CD4-positive, alpha-beta memory T cell (primary cell): ENCODE measurements at regions of chr20 and their contacts with region 1.

Region 1: GRCh38 chr20:21235484-21236445 is 67.4 kb upstream of the XRN2 start:
- DNase-seq: peak; percentile 57 to 66 (median 62)
- H3K4me3 ChIP-seq: no peak overlapping the region
- H3K4me3 Mint-ChIP-seq: no peak overlapping the region
- H3K27ac ChIP-seq: no peak overlapping the region
- H3K27ac Mint-ChIP-seq: no peak overlapping the region
- H3K4me1 ChIP-seq: peaks cover 4% of the 10 kb centered on the region
- H3K4me1 Mint-ChIP-seq: peaks cover 2 to 4% (median 3%) of the 10 kb centered on the region in 4 donors
- H3K27me3 ChIP-seq: no peaks in the 10 kb centered on the region
- H3K27me3 Mint-ChIP-seq: no peaks in the 10 kb centered on the region

Region 2: GRCh38 chr20:20338133-20338730 is 897.5 kb before region 1 on chr20:
- CTCF ChIA-PET with region 1: no interaction called
- POLR2A ChIA-PET with region 1: no interaction called
- intact Hi-C with region 1: no loop called
- DNase-seq: no peak
- H3K4me3 ChIP-seq: no peak overlapping the region
- H3K4me3 Mint-ChIP-seq: no peak overlapping the region
- H3K27ac ChIP-seq: no peak overlapping the region
- H3K27ac Mint-ChIP-seq: no peak overlapping the region
- H3K4me1 ChIP-seq: no peaks in the 10 kb centered on the region
- H3K4me1 Mint-ChIP-seq: no peaks in the 10 kb centered on the region
- H3K27me3 ChIP-seq: no peaks in the 10 kb centered on the region
- H3K27me3 Mint-ChIP-seq: peaks cover 2 to 7% of the 10 kb centered on the region in 2 donors

Region 3: GRCh38 chr20:21208999-21209398 is 26.8 kb before region 1 on chr20:
- CTCF ChIA-PET with region 1: no interaction called
- POLR2A ChIA-PET with region 1: no interaction called
- intact Hi-C with region 1: no loop called
- DNase-seq: no peak
- H3K4me3 ChIP-seq: no peak overlapping the region
- H3K4me3 Mint-ChIP-seq: no peak overlapping the region
- H3K27ac ChIP-seq: no peak overlapping the region
- H3K27ac Mint-ChIP-seq: no peak overlapping the region
- H3K4me1 ChIP-seq: no peaks in the 10 kb centered on the region
- H3K4me1 Mint-ChIP-seq: no peaks in the 10 kb centered on the region
- H3K27me3 ChIP-seq: no peaks in the 10 kb centered on the region
- H3K27me3 Mint-ChIP-seq: no peaks in the 10 kb centered on the region

Region 4: DNA sequence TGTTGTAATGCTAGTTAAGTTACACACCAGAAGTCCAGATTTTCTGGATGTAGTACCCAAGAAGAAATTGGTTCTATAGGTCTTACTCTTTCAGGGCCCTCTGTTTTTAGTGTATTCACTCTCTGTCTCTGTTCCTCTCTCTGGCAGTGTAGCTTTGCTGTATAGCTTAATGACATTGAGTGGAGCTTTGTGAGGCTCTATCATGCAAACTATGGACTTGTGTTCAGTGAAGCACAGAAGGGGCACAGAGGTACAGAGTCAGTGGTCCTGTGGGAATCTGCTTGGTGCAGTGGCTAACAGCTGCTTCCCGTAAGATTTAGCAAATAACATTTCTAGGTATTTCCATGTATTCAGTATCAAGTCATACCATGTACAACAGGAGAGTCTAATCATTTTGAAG is 135.4 kb after region 1 on chr20:
- CTCF ChIA-PET with region 1: interaction called, 11 read pairs
- POLR2A ChIA-PET with region 1: no interaction called
- intact Hi-C with region 1: no loop called
- DNase-seq: no peak
- H3K4me3 ChIP-seq: no peak overlapping the region
- H3K4me3 Mint-ChIP-seq: no peak overlapping the region
- H3K27ac ChIP-seq: no peak overlapping the region
- H3K27ac Mint-ChIP-seq: no peak overlapping the region
- H3K4me1 ChIP-seq: no peaks in the 10 kb centered on the region
- H3K4me1 Mint-ChIP-seq: peaks cover 6 to 22% (median 7%) of the 10 kb centered on the region in 4 donors
- H3K27me3 ChIP-seq: no peaks in the 10 kb centered on the region
- H3K27me3 Mint-ChIP-seq: no peaks in the 10 kb centered on the region

Region 5: GRCh38 chr20:21514553-21515251 is 278.9 kb after region 1 on chr20:
- CTCF ChIA-PET with region 1: interaction called, 337 read pairs
- POLR2A ChIA-PET with region 1: no interaction called
- intact Hi-C with region 1: no loop called
- DNase-seq: no peak
- H3K4me3 ChIP-seq: no peak overlapping the region
- H3K4me3 Mint-ChIP-seq: peak overlapping the region; percentile 52 to 83 (median 76)
- H3K27ac ChIP-seq: no peak overlapping the region
- H3K27ac Mint-ChIP-seq: peak overlapping the region in 1 of 7 donors; percentile 65
- H3K4me1 ChIP-seq: peaks cover 72% of the 10 kb centered on the region
- H3K4me1 Mint-ChIP-seq: peaks cover 26 to 81% (median 54%) of the 10 kb centered on the region in 4 donors
- H3K27me3 ChIP-seq: peaks cover 75% of the 10 kb centered on the region
- H3K27me3 Mint-ChIP-seq: peaks cover 62 to 66% of the 10 kb centered on the region in 2 donors

Region 6: DNA sequence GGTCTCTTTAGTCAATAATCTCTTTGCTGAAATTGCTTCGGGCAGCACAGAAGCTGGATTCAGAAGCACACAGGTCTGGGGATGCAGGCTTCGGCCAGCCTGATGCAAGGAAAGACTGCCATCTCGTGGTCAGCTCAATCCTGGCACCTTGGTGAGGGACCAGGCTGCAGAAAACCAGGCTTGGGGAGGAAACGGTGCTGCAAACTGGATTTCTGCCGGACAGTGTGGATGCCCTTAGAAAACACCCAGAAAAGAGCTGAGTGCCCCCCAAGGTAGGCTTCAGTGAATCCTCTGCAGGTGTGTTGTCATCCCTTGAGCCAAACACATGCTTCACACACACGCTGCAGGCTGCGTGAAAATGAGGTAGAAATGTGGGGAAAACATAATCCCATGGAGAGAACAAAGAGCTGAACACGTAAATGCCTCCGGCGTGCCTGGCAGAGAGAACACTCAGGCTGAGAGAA is 379.9 kb after region 1 on chr20:
- CTCF ChIA-PET with region 1: interaction called, 23 read pairs
- POLR2A ChIA-PET with region 1: no interaction called
- intact Hi-C with region 1: loop called (anchors 1 kb)
- DNase-seq: peak; percentile 19 to 42 (median 19)
- H3K4me3 ChIP-seq: no peak overlapping the region
- H3K4me3 Mint-ChIP-seq: no peak overlapping the region
- H3K27ac ChIP-seq: no peak overlapping the region
- H3K27ac Mint-ChIP-seq: no peak overlapping the region
- H3K4me1 ChIP-seq: no peaks in the 10 kb centered on the region
- H3K4me1 Mint-ChIP-seq: no peaks in the 10 kb centered on the region
- H3K27me3 ChIP-seq: no peaks in the 10 kb centered on the region
- H3K27me3 Mint-ChIP-seq: peaks cover 0 to 14% of the 10 kb centered on the region in 2 donors